Mammary epithelial cell (primary cell): ENCODE measurements at regions of chr11 and their contacts with region 1.

Region 1: DNA sequence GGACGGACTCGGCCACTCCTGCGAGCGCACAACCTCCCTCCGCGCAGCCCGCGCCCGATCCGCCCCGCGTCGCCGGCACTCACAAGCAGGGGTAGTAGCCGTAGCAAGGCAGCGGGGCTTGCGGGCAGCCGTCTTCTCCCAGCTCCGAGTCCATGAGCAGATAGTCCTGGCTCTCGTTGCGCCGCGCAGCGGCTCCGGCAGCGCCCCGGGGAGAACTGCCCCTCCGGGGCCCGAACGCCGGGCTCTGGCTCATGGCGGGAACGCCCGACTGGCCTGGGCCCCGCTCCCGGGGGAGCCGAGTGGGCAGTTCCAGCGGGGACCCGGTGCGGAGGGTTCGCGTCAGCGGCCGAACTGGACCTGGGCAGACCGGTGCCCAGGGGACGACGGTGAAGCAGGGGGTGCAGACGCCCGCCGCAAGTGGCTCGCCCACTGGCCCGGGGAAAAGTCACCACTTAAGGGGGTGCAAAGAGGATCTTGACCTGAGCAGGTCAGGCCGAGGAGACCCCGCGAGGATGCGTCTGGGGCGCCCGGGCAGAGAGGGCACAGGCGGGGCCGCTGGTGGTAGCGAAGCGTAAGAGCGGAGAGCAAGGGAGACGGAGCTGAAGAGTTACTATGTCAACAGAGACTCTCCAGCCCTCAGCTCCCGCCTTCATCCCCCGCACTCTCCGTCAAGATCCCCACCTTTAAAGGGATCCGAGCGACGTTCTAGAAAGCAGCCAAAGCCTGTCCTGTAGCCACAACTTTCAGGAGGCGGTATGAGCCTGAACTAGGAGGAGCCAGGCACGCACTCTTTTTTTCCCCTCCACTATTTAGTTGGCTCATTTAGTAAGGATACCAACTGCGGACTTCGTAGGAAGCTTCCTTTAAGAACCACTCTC is at the start of gene TRPC6:
- DNase-seq: peak; percentile 7
- H3K4me3 ChIP-seq: peak within 1 kb of the TSS in 2 of 3 experiments; percentile 29 to 33
- H3K27ac ChIP-seq: no peak within 1 kb of the TSS
- H3K4me1 ChIP-seq: peaks cover 7% of the 10 kb centered on the region
- H3K27me3 ChIP-seq: peaks cover 33% of the 10 kb centered on the region
- CTCF ChIP-seq: no peak
- total RNA-seq, gene TRPC6: 0.16 to 1.5 TPM

Region 2: DNA sequence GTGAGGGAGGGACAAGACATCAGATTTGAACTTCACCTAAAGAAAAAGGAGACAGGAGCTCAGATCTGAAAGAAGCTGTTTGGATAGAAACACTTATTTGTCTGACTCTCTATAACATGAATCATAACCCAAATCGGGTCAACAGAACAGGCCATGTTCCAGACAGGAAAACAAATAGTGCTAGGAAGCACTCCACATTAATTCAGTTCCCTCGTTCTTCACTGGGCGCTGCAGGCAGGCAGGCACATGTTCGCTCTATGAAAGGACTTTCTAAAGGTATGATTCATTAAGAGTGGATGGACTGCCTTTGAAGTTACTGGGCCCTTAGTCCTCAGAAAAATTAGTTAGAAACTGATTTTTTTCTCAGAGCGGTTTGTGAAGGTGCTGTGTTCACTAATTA is 137.8 kb after region 1 on chr11:
- CTCF ChIA-PET with region 1: no interaction called
- dilution Hi-C with region 1: no loop called
- in situ Hi-C with region 1: no loop called
- intact Hi-C with region 1: loop called (anchors 10 kb)
- DNase-seq: peak; percentile 93
- H3K4me3 ChIP-seq: no peak overlapping the region
- H3K27ac ChIP-seq: peak overlapping the region; percentile 75
- H3K4me1 ChIP-seq: peaks cover 27% of the 10 kb centered on the region
- H3K27me3 ChIP-seq: no peaks in the 10 kb centered on the region
- CTCF ChIP-seq: no peak